GM12878 (cell line): ENCODE measurements at regions of chr1 and their contacts with region 1.

Region 1: GRCh38 chr1:6245086-6245868 is 1.3 kb downstream of the HES3 start:
- DNase-seq: no peak
- ATAC-seq: peak; percentile 87
- H3K4me3 ChIP-seq: peak overlapping the region; percentile 41; the same call in 1 of the 2 replicates
- H3K27ac ChIP-seq: no peak overlapping the region
- H3K4me1 ChIP-seq: peaks cover 5% of the 10 kb centered on the region
- H3K27me3 ChIP-seq: peaks cover 17 to 26% of the 10 kb centered on the region in 2 experiments
- CTCF ChIP-seq: peak; percentile 73 to 96 (median 85)
- EP300 ChIP-seq: no peak
- POLR2A ChIP-seq: no peak
- RAD21 ChIP-seq: peak; percentile 57

Region 2: DNA sequence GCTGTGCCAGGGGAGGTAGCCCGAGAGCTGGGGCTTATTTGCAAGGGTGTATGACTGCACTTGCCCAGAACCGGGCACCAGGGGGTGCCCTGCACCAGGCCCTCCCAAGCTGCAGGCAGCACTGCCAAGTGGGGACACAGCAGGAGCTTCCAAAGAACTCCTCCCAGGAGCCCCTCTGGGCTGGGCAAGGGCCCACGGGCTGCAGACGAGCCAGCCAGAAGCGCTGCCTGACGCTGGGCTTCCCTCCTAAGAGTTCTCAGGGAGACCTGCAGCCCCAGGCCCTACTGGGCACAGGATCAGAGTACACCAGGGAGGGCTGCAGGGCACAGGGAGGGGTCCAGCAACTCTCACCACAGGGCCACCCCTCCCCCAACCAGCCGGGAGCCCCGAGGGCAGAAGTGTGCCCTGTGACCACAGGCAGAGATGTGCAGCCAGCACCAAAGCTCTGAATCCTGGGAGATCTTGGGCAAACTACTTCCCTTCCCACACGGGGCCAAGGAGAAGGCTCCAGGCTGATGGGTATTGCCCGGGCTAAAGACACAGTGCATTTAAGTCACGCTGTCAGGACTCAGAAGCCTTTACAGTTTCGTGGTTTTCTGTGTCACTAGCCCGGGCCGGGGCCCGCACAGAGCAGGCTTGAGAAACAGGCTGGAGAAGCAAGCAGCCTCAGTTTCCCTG is 136.2 kb before region 1 on chr1:
- CTCF ChIA-PET with region 1: interaction called, 4 read pairs
- POLR2A ChIA-PET with region 1: no interaction called
- RAD21 ChIA-PET with region 1: interaction called, 5 read pairs
- SMC1A ChIA-PET with region 1: interaction called, 4 read pairs
- in situ Hi-C with region 1: no loop called
- intact Hi-C with region 1: loop called (anchors 2 kb)
- DNase-seq: no peak
- ATAC-seq: peak; percentile 96
- H3K4me3 ChIP-seq: no peak overlapping the region
- H3K27ac ChIP-seq: no peak overlapping the region
- H3K4me1 ChIP-seq: no peaks in the 10 kb centered on the region
- H3K27me3 ChIP-seq: no peaks in the 10 kb centered on the region
- CTCF ChIP-seq: peak; percentile 52 to 77 (median 76)
- EP300 ChIP-seq: no peak
- POLR2A ChIP-seq: no peak
- RAD21 ChIP-seq: peak; percentile 67

Region 3: DNA sequence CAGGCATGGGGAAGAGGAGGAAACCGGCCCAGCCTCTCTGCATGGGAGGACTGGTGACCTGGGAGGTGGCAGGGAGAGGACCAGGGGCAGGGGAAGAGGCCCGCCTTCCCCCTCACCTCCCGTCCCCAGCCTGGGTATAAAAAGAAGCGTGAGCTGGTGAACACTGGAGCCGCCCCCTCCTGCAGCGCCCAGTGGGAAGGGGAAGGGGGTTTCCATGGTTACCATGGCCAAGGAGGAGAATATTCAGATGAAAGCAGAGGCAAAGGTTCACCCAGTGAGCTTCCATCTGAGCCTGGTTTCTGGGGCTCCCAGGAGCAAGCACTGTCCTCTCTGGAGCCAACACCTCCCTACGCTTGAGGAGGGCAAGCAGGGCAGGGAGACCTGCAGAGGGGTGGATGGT is 93.4 kb after region 1 on chr1:
- CTCF ChIA-PET with region 1: interaction called, 47 read pairs
- POLR2A ChIA-PET with region 1: no interaction called
- RAD21 ChIA-PET with region 1: interaction called, 32 read pairs
- SMC1A ChIA-PET with region 1: interaction called, 7 read pairs
- in situ Hi-C with region 1: no loop called
- intact Hi-C with region 1: loop called (anchors 1 kb)
- DNase-seq: no peak
- ATAC-seq: no peak
- H3K4me3 ChIP-seq: no peak overlapping the region
- H3K27ac ChIP-seq: no peak overlapping the region
- H3K4me1 ChIP-seq: no peaks in the 10 kb centered on the region
- H3K27me3 ChIP-seq: no peaks in the 10 kb centered on the region
- CTCF ChIP-seq: no peak
- EP300 ChIP-seq: no peak
- POLR2A ChIP-seq: no peak
- RAD21 ChIP-seq: no peak

Region 4: DNA sequence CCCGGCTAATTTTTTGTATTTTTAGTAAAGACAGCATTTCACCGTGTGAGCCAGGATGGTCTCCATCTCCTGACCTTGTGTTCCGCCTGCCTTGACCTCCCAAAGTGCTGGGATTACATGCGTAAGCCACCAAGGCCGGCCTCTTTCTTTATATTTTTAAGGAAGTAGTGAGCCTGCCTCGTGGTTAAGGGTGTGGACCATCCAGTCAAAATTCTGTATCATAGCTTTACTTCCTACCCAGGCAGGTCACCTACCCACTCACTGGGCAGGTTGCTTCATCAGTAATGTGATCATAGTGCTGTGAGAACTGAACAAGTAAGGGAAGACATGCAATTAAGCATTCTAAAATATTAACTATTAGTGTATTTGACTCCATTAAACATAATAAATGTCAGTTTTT is 156.4 kb after region 1 on chr1:
- CTCF ChIA-PET with region 1: interaction called, 13 read pairs
- POLR2A ChIA-PET with region 1: no interaction called
- RAD21 ChIA-PET with region 1: interaction called, 15 read pairs
- SMC1A ChIA-PET with region 1: interaction called, 4 read pairs
- in situ Hi-C with region 1: loop called (anchors 5 kb)
- intact Hi-C with region 1: loop called (anchors 2 kb)
- DNase-seq: no peak
- ATAC-seq: no peak
- H3K4me3 ChIP-seq: no peak overlapping the region
- H3K27ac ChIP-seq: no peak overlapping the region
- H3K4me1 ChIP-seq: no peaks in the 10 kb centered on the region
- H3K27me3 ChIP-seq: no peaks in the 10 kb centered on the region
- CTCF ChIP-seq: no peak
- EP300 ChIP-seq: no peak
- POLR2A ChIP-seq: no peak
- RAD21 ChIP-seq: no peak

Region 5: DNA sequence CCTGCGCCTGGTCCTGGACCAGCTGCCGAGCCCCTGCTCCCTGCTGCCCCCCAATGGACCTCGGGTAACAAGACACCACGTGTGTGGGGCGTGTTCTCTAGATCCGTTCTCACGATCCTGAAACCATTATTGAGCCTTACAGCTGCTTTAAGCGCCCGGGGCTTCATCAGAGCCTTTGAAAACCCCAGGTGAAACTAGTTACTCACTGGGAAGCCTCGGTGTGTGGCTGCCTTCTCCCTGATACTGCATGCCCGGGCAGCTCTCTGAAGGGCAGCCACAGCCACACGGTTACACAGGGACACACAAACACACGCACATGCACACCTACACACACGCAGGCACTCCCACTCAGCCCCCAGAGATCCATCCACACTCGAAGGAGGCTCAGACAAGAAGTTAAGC is 169.2 kb after region 1 on chr1:
- CTCF ChIA-PET with region 1: interaction called, 14 read pairs
- POLR2A ChIA-PET with region 1: no interaction called
- RAD21 ChIA-PET with region 1: interaction called, 3 read pairs
- SMC1A ChIA-PET with region 1: interaction called, 4 read pairs
- in situ Hi-C with region 1: no loop called
- intact Hi-C with region 1: no loop called
- DNase-seq: peak; percentile 39
- ATAC-seq: peak; percentile 97
- H3K4me3 ChIP-seq: no peak overlapping the region
- H3K27ac ChIP-seq: peak overlapping the region; percentile 21; the same call in 1 of the 2 replicates
- H3K4me1 ChIP-seq: peaks cover 13% of the 10 kb centered on the region
- H3K27me3 ChIP-seq: peaks cover 4 to 7% of the 10 kb centered on the region in 2 experiments; a peak in 3 of 4 replicates
- CTCF ChIP-seq: peak; percentile 58 to 68 (median 68)
- EP300 ChIP-seq: 0 out of 4 replicates have a peak, but pooled peaks of 1 of the 2 experiments have one; percentile 36
- POLR2A ChIP-seq: no peak; the same call in 1 of the 2 replicates
- RAD21 ChIP-seq: no peak

Region 6: GRCh38 chr1:7172804-7173203 is 927.5 kb after region 1 on chr1:
- CTCF ChIA-PET with region 1: no interaction called
- POLR2A ChIA-PET with region 1: no interaction called
- RAD21 ChIA-PET with region 1: no interaction called
- SMC1A ChIA-PET with region 1: no interaction called
- in situ Hi-C with region 1: no loop called
- intact Hi-C with region 1: no loop called
- DNase-seq: no peak
- ATAC-seq: no peak
- H3K4me3 ChIP-seq: no peak overlapping the region
- H3K27ac ChIP-seq: no peak overlapping the region
- H3K4me1 ChIP-seq: no peaks in the 10 kb centered on the region
- H3K27me3 ChIP-seq: peaks cover 0 to 3% of the 10 kb centered on the region in 2 experiments; a peak in 1 of 4 replicates
- CTCF ChIP-seq: no peak
- EP300 ChIP-seq: no peak
- POLR2A ChIP-seq: no peak
- RAD21 ChIP-seq: no peak